ENCODE measurements at regions of chr7 and their contacts with region 1.

Region 1: GRCh38 chr7:30938435-30939316 is 25.1 kb upstream of the GHRHR start:
- DNase-seq: peak; percentile 98
- ATAC-seq: peak; percentile 95
- H3K4me3 Mint-ChIP-seq: peak overlapping the region; percentile 47
- H3K27ac Mint-ChIP-seq: no peak overlapping the region
- H3K4me1 Mint-ChIP-seq: 0 out of 2 replicates have a peak, but pooled peaks cover 4% of the 10 kb centered on the region
- H3K27me3 Mint-ChIP-seq: no peaks in the 10 kb centered on the region; the same call in none of the 2 replicates
- CTCF ChIP-seq: peak; percentile 98

Region 2: DNA sequence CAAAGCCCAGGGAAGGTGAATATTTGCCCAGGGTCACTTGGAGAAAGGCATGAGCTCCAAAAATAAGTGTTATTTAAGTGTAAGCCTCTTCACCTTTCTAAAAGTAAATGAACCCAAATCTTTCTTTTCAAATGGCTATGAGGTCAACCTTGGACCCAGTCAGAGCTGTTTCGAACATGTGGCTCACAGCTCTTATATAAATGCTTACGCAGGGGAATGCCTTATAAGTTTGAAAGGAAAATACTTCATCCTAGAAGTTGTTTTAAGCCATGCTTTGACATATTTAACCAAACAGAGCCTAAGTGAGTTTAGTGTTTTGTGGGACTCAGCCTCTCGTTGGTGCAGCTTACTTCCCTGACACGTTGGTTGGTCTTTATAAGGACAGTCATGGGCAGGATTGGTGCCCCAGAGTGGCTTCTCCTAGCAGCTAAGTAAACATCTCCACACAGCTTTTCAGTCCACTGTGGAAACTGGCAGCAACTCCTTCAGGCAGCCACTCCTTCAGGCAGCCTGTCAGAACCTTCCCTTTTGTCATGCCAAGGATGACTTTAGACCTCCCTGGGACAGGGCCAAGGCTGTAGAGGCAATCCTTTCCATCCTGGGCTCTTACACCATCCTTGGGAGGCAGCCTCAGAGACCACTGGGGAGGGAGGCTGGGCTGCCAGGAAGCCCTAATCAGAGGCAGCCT is 123.8 kb before region 1 on chr7:
- CTCF ChIA-PET with region 1: interaction called, 26 read pairs
- POLR2A ChIA-PET with region 1: no interaction called
- DNase-seq: no peak
- ATAC-seq: no peak
- H3K4me3 Mint-ChIP-seq: no peak overlapping the region
- H3K27ac Mint-ChIP-seq: no peak overlapping the region
- H3K4me1 Mint-ChIP-seq: peaks cover 9% of the 10 kb centered on the region
- H3K27me3 Mint-ChIP-seq: no peaks in the 10 kb centered on the region
- CTCF ChIP-seq: no peak

Region 3: DNA sequence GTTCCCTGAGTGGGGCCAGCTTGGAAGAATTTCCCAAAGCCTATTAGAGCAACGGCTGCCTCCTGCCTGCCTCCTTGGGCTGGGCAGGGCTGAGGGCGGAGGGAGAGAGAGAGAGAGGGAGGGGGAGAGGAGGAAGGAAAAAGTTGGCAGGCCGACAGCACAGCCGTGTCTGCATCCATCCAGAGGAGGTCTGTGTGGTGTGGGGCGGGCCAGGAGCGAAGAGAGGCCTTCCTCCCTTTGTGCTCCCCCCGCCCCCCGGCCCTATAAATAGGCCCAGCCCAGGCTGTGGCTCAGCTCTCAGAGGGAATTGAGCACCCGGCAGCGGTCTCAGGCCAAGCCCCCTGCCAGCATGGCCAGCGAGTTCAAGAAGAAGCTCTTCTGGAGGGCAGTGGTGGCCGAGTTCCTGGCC is 27.1 kb before region 1 on chr7 and contains the start of gene AQP1:
- CTCF ChIA-PET with region 1: interaction called, 39 read pairs
- POLR2A ChIA-PET with region 1: no interaction called
- DNase-seq: no peak
- ATAC-seq: no peak
- H3K4me3 Mint-ChIP-seq: no peak within 1 kb of the TSS
- H3K27ac Mint-ChIP-seq: no peak within 1 kb of the TSS
- H3K4me1 Mint-ChIP-seq: peaks cover 14% of the 10 kb centered on the region
- H3K27me3 Mint-ChIP-seq: no peaks in the 10 kb centered on the region
- CTCF ChIP-seq: no peak
- total RNA-seq, gene AQP1: 0.81 to 1.4 TPM (median 1.1 TPM) in 3 replicates

Region 4: GRCh38 chr7:30965372-30965771 is 26.7 kb after region 1 on chr7:
- CTCF ChIA-PET with region 1: interaction called, 107 read pairs
- POLR2A ChIA-PET with region 1: no interaction called
- DNase-seq: no peak
- ATAC-seq: no peak
- H3K4me3 Mint-ChIP-seq: no peak overlapping the region
- H3K27ac Mint-ChIP-seq: no peak overlapping the region
- H3K4me1 Mint-ChIP-seq: peaks cover 4% of the 10 kb centered on the region; the same call in 1 of the 2 replicates
- H3K27me3 Mint-ChIP-seq: no peaks in the 10 kb centered on the region; the same call in 1 of the 2 replicates
- CTCF ChIP-seq: no peak

Region 5: DNA sequence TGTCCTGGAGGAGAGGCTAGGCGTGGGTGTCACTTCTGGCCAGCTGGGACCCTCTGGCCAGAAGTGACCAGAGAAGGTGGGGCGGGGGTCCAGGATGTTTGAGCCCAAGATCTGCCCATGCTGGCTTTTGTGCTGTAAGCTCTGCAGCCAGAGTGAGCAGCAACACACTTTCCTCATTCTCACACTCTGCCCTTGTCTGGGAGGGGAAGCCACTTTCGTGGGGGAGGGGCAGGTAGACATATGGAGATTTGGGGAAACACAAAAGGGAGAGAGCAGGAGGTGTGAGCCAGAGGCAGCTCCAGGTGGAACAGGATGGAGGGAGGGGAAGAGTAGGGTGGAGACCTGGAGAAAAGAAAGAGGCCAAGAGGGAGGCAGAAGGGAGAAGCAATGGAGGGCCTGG is 82.0 kb after region 1 on chr7:
- CTCF ChIA-PET with region 1: interaction called, 10 read pairs
- POLR2A ChIA-PET with region 1: interaction called, 6 read pairs
- DNase-seq: peak; percentile 39
- ATAC-seq: peak; percentile 84
- H3K4me3 Mint-ChIP-seq: no peak overlapping the region
- H3K27ac Mint-ChIP-seq: no peak overlapping the region
- H3K4me1 Mint-ChIP-seq: peaks cover 34% of the 10 kb centered on the region
- H3K27me3 Mint-ChIP-seq: no peaks in the 10 kb centered on the region
- CTCF ChIP-seq: no peak

Region 6: DNA sequence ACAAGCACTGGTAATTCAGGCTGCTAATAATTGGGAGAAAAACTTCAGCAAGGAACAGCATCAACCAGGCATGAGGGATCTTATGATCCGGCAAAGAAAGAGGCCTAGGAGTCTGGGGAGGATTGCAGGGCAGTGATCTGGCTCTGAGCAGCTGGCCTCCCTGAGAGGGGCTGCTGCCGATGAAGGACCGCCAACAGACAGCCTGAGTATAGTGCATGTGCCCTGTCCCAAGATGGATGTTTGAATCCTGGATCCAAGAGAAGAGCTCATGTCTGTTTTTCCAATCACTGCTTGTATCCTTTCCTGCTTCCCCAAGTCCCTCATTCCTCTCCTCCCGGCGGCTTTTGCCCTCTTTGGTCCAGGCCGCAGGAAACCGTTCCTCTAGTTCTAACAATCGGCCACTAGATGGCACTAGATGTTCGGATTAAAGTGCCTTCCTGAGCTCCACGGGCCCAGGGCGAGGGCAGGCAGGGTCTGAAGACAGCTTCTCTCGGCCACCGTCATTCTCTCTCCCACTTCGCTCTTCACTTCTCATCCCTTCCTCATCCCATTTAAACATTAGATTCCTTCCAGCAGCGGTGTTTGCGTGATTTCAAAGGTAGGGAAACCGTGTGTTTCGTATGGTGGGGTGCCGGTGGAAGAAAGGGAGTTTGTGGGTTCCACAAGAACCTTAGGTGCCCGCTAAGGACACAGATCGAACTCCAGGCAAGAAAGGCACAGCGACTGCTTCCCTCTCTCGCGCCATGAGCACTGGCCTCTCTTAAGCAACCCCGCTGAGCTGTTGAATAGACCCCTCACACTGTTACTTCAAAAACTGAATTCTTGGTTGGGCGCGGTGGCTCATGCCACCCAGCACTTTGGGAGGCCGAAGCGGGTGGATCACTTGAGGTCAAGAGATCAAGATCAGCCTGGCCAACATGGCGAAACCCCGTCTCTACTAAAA is 195.8 kb after region 1 on chr7:
- CTCF ChIA-PET with region 1: interaction called, 17 read pairs
- POLR2A ChIA-PET with region 1: no interaction called
- DNase-seq: peak; percentile 80
- ATAC-seq: peak; percentile 99
- H3K4me3 Mint-ChIP-seq: peak overlapping the region; percentile 9
- H3K27ac Mint-ChIP-seq: no peak overlapping the region
- H3K4me1 Mint-ChIP-seq: peaks cover 5% of the 10 kb centered on the region
- H3K27me3 Mint-ChIP-seq: peaks cover 7% of the 10 kb centered on the region
- CTCF ChIP-seq: peak; percentile 77